H1 (cell line): ENCODE measurements at regions of chr14 and their contacts with region 1.

Region 1: GRCh38 chr14:22002860-22003309 is 329.3 kb upstream of the OR4E1 start:
- DNase-seq: peak in 1 of 2 experiments; percentile 76
- H3K4me3 ChIP-seq: no peak overlapping the region
- H3K27ac ChIP-seq: no peak overlapping the region
- H3K4me1 ChIP-seq: no peaks in the 10 kb centered on the region
- H3K27me3 ChIP-seq: no peaks in the 10 kb centered on the region
- CTCF ChIP-seq: peak; percentile 79 to 97 (median 87)
- EP300 ChIP-seq: no peak
- POLR2A ChIP-seq: no peak
- RAD21 ChIP-seq: peak; percentile 63 to 73

Region 2: GRCh38 chr14:21978184-21978998 is 24.5 kb before region 1 on chr14:
- CTCF ChIA-PET with region 1: interaction called, 40 read pairs
- POLR2A ChIA-PET with region 1: interaction called, 3 read pairs
- DNase-seq: peak in 1 of 2 experiments; percentile 84
- H3K4me3 ChIP-seq: no peak overlapping the region
- H3K27ac ChIP-seq: no peak overlapping the region
- H3K4me1 ChIP-seq: no peaks in the 10 kb centered on the region
- H3K27me3 ChIP-seq: peaks cover 0 to 1% (median 0%) of the 10 kb centered on the region in 4 experiments; a peak in 1 of 7 replicates
- CTCF ChIP-seq: peak; percentile 81 to 93 (median 89)
- EP300 ChIP-seq: no peak
- POLR2A ChIP-seq: no peak
- RAD21 ChIP-seq: peak; percentile 61 to 65

Region 3: GRCh38 chr14:21987937-21988336 is 14.9 kb before region 1 on chr14:
- CTCF ChIA-PET with region 1: interaction called, 141 read pairs
- POLR2A ChIA-PET with region 1: no interaction called
- DNase-seq: no peak
- H3K4me3 ChIP-seq: no peak overlapping the region
- H3K27ac ChIP-seq: no peak overlapping the region
- H3K4me1 ChIP-seq: no peaks in the 10 kb centered on the region
- H3K27me3 ChIP-seq: peaks cover 0 to 1% (median 0%) of the 10 kb centered on the region in 4 experiments; a peak in 1 of 7 replicates
- CTCF ChIP-seq: peak in 2 of 3 experiments; percentile 62 to 78; a peak in 3 of 4 replicates
- EP300 ChIP-seq: no peak
- POLR2A ChIP-seq: no peak
- RAD21 ChIP-seq: peak; percentile 38 to 55

Region 4: DNA sequence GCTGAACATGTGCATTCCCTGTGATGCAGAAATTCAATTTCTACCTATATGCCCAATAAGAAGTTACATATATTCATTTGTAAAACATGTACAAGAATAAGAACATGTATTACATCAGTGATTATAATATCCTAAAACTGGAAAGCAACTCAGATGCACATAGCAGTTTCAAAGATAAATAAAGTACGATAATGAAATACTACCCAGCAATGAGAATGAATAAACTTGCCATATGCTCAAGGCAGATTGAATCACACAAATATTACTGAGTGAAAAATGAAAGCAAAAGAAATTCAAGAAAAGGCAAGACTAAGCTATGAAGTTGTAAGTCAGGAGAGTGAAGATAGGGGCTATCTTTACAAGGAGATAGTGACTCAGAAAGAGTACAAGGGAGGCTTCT is 16.0 kb after region 1 on chr14:
- CTCF ChIA-PET with region 1: interaction called, 23 read pairs
- POLR2A ChIA-PET with region 1: no interaction called
- DNase-seq: no peak
- H3K4me3 ChIP-seq: no peak overlapping the region
- H3K27ac ChIP-seq: no peak overlapping the region
- H3K4me1 ChIP-seq: no peaks in the 10 kb centered on the region
- H3K27me3 ChIP-seq: no peaks in the 10 kb centered on the region
- CTCF ChIP-seq: no peak
- EP300 ChIP-seq: no peak
- POLR2A ChIP-seq: no peak
- RAD21 ChIP-seq: no peak

Region 5: DNA sequence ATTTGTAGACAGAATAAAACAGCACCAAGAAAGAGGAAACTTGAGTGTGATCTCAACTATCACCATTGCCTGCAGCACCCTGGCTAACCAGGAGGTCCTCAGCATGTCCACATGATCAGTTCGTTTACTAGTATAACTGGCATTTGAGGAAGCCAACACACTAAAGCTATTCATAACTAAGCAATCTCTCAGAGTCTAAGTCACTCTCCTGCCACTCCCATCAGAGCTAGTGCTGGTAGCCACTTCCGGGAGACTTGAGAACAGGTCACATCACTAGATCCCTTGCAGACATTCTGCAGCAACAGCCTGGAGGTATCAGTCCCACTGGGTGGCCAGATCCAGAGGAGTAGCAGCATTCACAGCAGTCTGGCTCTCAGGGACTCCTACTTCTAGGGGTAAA is 23.6 kb after region 1 on chr14:
- CTCF ChIA-PET with region 1: interaction called, 23 read pairs
- POLR2A ChIA-PET with region 1: no interaction called
- DNase-seq: no peak
- H3K4me3 ChIP-seq: no peak overlapping the region
- H3K27ac ChIP-seq: no peak overlapping the region
- H3K4me1 ChIP-seq: no peaks in the 10 kb centered on the region
- H3K27me3 ChIP-seq: no peaks in the 10 kb centered on the region
- CTCF ChIP-seq: no peak
- EP300 ChIP-seq: no peak
- POLR2A ChIP-seq: no peak
- RAD21 ChIP-seq: no peak

Region 6: GRCh38 chr14:22047115-22047514 is 44.2 kb after region 1 on chr14:
- CTCF ChIA-PET with region 1: interaction called, 10 read pairs
- POLR2A ChIA-PET with region 1: no interaction called
- DNase-seq: no peak
- H3K4me3 ChIP-seq: no peak overlapping the region
- H3K27ac ChIP-seq: no peak overlapping the region
- H3K4me1 ChIP-seq: no peaks in the 10 kb centered on the region
- H3K27me3 ChIP-seq: no peaks in the 10 kb centered on the region
- CTCF ChIP-seq: peak; percentile 13 to 71 (median 58)
- EP300 ChIP-seq: no peak
- POLR2A ChIP-seq: no peak
- RAD21 ChIP-seq: peak; percentile 55 to 65

Region 7: DNA sequence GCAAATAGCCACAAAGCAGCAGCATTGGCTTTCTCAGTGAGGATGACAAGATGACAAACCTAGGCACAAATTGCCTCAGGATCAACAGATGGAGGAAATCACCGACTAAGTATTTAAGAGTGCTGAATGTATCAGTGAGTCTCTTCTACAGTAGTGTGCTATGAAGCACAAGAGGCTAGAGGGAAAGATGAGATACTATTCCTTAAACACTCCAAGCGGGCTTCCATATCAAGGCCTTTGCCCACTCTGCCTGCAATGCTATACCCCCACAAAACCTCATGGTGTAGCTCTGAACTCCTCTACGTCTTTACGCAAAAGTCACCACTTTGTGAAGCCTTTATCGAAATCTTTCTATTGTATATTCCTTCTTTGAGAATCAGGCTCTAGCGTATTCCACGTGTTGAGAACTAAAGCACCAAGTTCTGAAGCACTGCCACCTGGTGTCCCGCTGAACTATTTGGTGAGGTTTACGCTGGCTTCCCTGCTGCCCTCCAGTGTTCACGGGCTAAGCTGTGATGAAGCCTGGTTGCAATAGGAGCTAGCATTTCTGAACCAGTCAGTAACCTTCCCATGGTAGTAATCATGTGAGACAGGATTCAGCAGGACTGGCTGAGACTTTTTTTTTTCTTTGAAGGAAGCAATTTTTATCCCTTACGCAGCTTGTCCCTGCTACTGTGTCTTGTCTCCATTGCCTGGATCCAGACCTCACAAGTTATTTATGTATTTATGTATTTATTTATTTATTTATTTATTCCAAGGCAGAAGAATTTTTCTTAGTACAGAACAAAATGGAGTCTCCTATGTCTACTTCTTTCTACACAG is 97.3 kb after region 1 on chr14:
- CTCF ChIA-PET with region 1: interaction called, 25 read pairs
- POLR2A ChIA-PET with region 1: no interaction called
- DNase-seq: peak; percentile 70 to 72
- H3K4me3 ChIP-seq: no peak overlapping the region
- H3K27ac ChIP-seq: no peak overlapping the region
- H3K4me1 ChIP-seq: peaks cover 0 to 4% (median 0%) of the 10 kb centered on the region in 4 experiments; a peak in 1 of 7 replicates
- H3K27me3 ChIP-seq: 0 out of 7 replicates have a peak, but pooled peaks cover 0 to 2% (median 0%) of the 10 kb centered on the region in 4 experiments
- CTCF ChIP-seq: peak; percentile 84 to 99 (median 90)
- EP300 ChIP-seq: no peak
- POLR2A ChIP-seq: no peak
- RAD21 ChIP-seq: peak; percentile 60 to 67